BJ (cell line): ENCODE measurements at regions of chr6 and their contacts with region 1.

Region 1: GRCh38 chr6:108526739-108527174 is 34.0 kb upstream of the FOXO3 start:
- DNase-seq: no peak
- H3K4me3 ChIP-seq: no peak overlapping the region
- H3K27me3 ChIP-seq: no peaks in the 10 kb centered on the region
- CTCF ChIP-seq: peak; percentile 82

Region 2: DNA sequence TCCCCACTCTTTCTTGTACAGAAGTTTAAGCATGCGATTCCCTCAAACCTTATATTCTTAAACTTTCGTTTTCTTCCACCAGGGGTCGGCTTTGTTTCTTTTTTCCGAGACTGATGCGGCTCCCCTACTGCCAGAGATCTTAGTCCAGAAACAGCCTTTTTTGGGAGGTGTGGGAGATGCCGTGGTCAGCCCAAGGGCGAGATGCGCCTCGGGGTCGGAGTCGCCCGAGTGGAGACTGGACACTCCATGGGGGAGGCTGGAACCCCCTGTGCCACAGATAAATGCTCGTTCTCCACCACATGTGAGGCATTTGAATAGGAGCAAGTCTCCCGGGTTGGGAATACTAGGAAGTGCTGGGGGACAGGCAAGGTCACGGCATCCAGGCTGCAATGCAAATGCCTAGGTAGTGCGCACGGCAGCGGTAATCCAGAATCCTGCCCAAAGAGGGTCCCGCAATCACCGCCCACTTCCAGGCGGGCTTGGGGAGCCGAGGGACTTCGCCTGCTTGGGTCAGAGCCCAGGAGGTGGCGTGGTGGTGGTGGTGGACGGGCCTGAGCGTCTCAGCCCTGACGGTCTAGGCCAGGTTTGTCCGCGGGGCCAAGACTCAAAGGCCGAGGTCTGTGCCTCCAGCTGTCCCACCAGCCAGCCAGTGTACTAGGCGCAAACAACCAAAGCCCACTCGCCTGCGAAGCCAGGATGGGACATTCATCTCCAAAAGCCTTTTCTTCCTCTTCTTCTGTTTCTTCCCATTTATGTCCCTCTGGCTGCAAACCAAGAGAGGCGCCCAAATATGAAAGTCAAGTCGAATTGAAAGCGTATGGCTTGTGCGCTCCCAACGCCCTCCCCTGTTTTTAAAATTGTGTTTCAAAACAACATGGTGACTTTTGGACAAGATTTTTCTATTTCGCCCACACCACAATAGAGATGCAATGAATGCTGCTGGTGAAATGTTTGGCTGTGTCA is 412.9 kb before region 1 on chr6:
- CTCF ChIA-PET with region 1: interaction called, 36 read pairs
- POLR2A ChIA-PET with region 1: no interaction called
- DNase-seq: no peak
- H3K4me3 ChIP-seq: 0 out of 2 replicates have a peak overlapping the region, but pooled peaks have one; percentile 10
- H3K27me3 ChIP-seq: peaks cover 44% of the 10 kb centered on the region
- CTCF ChIP-seq: peak; percentile 63